ENCODE measurements at regions of chr4 and their contacts with region 1.

Region 1: DNA sequence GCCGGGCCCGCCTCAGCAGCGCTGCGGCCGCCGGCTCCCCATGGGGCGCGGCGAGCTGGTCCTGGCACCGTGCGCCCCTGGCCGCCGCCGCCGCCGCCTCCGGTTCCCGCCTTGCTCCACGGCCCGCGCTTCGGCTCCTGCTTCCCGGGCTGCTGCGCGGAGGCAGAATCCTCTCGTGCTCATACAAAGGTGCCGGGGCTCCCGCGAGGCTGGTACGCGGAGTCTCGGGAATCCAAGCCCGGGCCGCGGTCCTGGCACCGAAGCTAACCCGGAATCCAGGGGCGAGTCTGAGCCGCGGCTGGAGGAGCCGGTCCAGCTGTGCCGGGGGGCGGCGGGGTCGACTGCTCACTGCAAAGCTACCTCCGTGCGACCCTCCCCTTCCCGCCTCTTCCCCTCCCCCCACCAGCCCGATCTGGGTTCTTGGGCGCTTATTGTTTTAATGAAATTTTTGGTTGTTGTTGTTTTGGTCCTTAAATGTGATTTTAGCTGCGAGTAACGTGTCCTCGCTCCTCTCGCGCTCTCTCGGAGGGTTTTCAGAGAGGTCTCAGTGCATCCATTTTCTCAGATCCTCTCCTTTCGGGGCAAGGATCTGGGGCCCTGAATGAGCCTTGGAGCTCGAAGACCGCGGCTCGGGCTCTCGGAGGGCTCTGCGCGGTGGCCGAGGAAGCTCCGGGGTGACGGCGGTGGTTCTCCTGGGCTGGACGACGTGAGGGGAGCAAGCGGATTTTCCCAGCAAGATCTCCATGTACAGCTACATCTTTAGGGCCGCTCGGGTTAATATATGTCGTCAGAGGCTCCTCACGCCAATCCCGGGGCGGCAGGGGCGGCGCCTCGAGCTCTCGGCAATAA is at the start of gene HAND2:
- DNase-seq: no peak
- H3K4me3 Mint-ChIP-seq: peak within 1 kb of the TSS; percentile 61
- H3K27ac Mint-ChIP-seq: peak within 1 kb of the TSS; percentile 42
- H3K4me1 Mint-ChIP-seq: peaks cover 13% of the 10 kb centered on the region
- H3K27me3 Mint-ChIP-seq: peaks cover 83% of the 10 kb centered on the region
- total RNA-seq, gene HAND2: not detected

Region 2: GRCh38 chr4:173516621-173517524 is 12.8 kb before region 1 on chr4:
- CTCF ChIA-PET with region 1: no interaction called
- POLR2A ChIA-PET with region 1: no interaction called
- intact Hi-C with region 1: loop called (anchors 2 kb)
- DNase-seq: no peak
- H3K4me3 Mint-ChIP-seq: no peak overlapping the region
- H3K27ac Mint-ChIP-seq: no peak overlapping the region
- H3K4me1 Mint-ChIP-seq: peaks cover 12% of the 10 kb centered on the region
- H3K27me3 Mint-ChIP-seq: peaks cover 83% of the 10 kb centered on the region

Region 3: DNA sequence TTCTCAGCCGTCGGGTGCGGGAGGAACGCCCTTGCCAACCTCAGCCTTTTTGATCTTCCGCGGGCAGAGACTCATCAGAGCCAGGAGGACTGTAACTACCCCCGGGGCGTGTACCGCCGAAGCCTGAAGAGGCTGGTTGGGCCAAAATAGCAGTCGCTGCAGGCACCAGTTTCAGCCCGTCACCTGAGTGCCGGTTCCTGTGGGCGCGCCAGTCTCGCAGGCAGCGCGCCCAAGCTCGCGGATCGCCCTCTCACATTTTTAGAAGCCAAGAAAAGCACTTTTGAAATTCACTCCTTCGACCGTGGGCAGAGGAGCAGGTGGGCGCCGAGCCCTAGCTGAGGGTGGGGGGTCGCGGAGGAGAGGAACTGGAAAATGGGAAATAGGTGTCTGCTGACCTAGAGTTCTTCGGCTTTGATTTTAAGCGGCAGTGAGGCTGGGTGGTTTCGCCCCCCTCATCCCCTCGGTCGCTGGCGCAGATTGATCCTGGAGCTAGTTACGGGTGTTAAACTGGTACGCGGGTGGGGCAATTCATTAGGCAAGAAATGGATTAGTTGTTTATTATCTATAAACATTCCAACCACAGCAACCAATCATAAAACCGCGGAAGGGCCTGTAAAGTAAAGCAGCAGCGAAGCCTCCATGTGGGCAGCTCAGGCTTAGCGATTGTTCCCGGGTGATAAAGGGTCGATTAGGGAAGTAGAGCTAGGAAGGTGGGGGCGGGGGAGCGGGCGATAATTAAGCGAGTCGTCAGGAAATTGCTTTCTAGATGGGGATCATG is 684.6 kb after region 1 on chr4:
- CTCF ChIA-PET with region 1: no interaction called
- POLR2A ChIA-PET with region 1: no interaction called
- intact Hi-C with region 1: loop called (anchors 5 kb)
- DNase-seq: peak; percentile 53
- H3K4me3 Mint-ChIP-seq: peak overlapping the region; percentile 47
- H3K27ac Mint-ChIP-seq: no peak overlapping the region
- H3K4me1 Mint-ChIP-seq: peaks cover 43% of the 10 kb centered on the region
- H3K27me3 Mint-ChIP-seq: peaks cover 84% of the 10 kb centered on the region